ENCODE measurements at regions of chr2 and their contacts with region 1.

Region 1: GRCh38 chr2:226478109-226478809 is 321.4 kb downstream of the IRS1 start:
- DNase-seq: peak; percentile 78
- H3K4me3 ChIP-seq: no peak overlapping the region
- H3K27ac ChIP-seq: peak overlapping the region; percentile 59 to 83 (median 74)
- H3K4me1 ChIP-seq: peaks cover 0 to 38% (median 16%) of the 10 kb centered on the region in 4 donors
- H3K27me3 ChIP-seq: no peaks in the 10 kb centered on the region
- CTCF ChIP-seq: no peak
- EP300 ChIP-seq: peak in 3 of 4 donors; percentile 60 to 71 (median 66)
- POLR2A ChIP-seq: no peak

Region 2: DNA sequence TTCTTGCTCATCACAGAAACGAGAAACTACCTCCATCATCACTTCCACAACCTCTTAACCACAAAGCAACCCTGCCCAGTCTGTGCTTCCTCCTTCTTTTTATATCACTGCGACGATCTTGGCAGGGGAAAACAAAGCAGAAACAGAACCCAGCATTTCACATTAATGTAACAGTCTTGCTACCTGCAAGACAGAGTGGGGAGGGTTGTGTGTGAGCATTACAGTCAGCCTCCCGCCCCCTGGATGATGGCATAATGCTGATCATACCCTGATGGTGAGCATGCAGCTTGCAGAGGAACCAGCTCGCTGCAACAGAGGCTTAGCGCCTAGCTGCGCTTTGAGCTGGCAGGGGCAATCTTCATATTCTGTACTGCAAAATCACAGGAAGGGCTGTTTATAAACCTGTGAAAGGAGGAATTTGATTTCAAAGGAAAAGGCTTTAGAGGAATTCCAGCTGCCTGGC is 54.7 kb before region 1 on chr2:
- intact Hi-C with region 1: loop called (anchors 5 kb)
- DNase-seq: peak; percentile 69
- H3K4me3 ChIP-seq: peak overlapping the region in 3 of 4 donors; percentile 2 to 16 (median 12)
- H3K27ac ChIP-seq: peak overlapping the region in 3 of 4 donors; percentile 64 to 74 (median 67)
- H3K4me1 ChIP-seq: peaks cover 0 to 17% (median 16%) of the 10 kb centered on the region in 4 donors
- H3K27me3 ChIP-seq: no peaks in the 10 kb centered on the region
- CTCF ChIP-seq: no peak
- EP300 ChIP-seq: peak in 1 of 4 donors; percentile 55
- POLR2A ChIP-seq: no peak

Region 3: GRCh38 chr2:226631671-226632070 is 153.4 kb after region 1 on chr2:
- intact Hi-C with region 1: loop called (anchors 5 kb)
- DNase-seq: peak; percentile 90
- H3K4me3 ChIP-seq: no peak overlapping the region
- H3K27ac ChIP-seq: peak overlapping the region; percentile 39 to 84 (median 82)
- H3K4me1 ChIP-seq: peaks cover 0 to 29% (median 22%) of the 10 kb centered on the region in 4 donors
- H3K27me3 ChIP-seq: no peaks in the 10 kb centered on the region
- CTCF ChIP-seq: no peak
- EP300 ChIP-seq: peak; percentile 98 to 100 (median 98)
- POLR2A ChIP-seq: no peak

Region 4: GRCh38 chr2:226758921-226759640 is 280.8 kb after region 1 on chr2:
- intact Hi-C with region 1: loop called (anchors 10 kb)
- DNase-seq: no peak
- H3K4me3 ChIP-seq: no peak overlapping the region
- H3K27ac ChIP-seq: peak overlapping the region in 3 of 4 donors; percentile 51 to 77 (median 76)
- H3K4me1 ChIP-seq: peaks cover 0 to 75% (median 67%) of the 10 kb centered on the region in 4 donors
- H3K27me3 ChIP-seq: no peaks in the 10 kb centered on the region
- CTCF ChIP-seq: no peak
- EP300 ChIP-seq: no peak
- POLR2A ChIP-seq: no peak